ENCODE measurements at regions of chr19 and their contacts with region 1.

Region 1: GRCh38 chr19:13905938-13906904 is at the starts of genes BRME1 and CC2D1A:
- DNase-seq: peak; percentile 76
- ATAC-seq: peak; percentile 98
- H3K4me3 ChIP-seq: peak within 1 kb of the TSS; percentile 81 to 92 (median 90)
- H3K27ac ChIP-seq: peak within 1 kb of the TSS; percentile 73
- H3K4me1 ChIP-seq: peaks cover 24% of the 10 kb centered on the region
- H3K27me3 ChIP-seq: no peaks in the 10 kb centered on the region
- CTCF ChIP-seq: peak; percentile 33
- EP300 ChIP-seq: peak in 1 of 2 experiments; percentile 18; a peak in 1 of 4 replicates
- POLR2A ChIP-seq: peak; percentile 59 to 69
- RAD21 ChIP-seq: no peak
- total RNA-seq, gene BRME1: 0.84 and 1.5 TPM in 2 replicates
- total RNA-seq, gene CC2D1A: 6.4 and 9.7 TPM in 2 replicates

Region 2: DNA sequence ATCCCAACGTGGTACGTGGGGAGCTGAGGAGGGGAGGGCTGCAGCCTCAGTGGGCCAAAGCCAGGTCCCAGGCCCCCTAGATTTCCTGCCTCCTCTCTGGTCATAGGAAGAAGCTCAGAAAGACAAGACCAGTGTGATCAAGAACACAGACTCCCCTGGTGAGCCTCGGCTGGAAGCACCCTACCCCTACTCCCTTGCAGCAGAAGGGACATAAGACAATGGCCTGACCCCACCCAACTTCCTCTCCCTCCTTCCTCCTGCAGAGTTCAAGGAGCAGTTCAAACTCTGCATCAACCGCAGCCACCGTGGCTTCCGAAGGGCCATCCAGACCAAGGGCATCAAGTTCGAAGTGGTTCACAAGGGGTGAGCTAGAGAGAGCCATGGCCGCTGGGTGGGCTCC is 20.5 kb after region 1 on chr19:
- CTCF ChIA-PET with region 1: no interaction called
- POLR2A ChIA-PET with region 1: no interaction called
- in situ Hi-C with region 1: no loop called
- intact Hi-C with region 1: no loop called
- DNase-seq: no peak
- ATAC-seq: no peak
- H3K4me3 ChIP-seq: no peak overlapping the region
- H3K27ac ChIP-seq: no peak overlapping the region
- H3K4me1 ChIP-seq: no peaks in the 10 kb centered on the region
- H3K27me3 ChIP-seq: no peaks in the 10 kb centered on the region
- CTCF ChIP-seq: no peak
- EP300 ChIP-seq: no peak
- POLR2A ChIP-seq: no peak
- RAD21 ChIP-seq: no peak

Region 3: DNA sequence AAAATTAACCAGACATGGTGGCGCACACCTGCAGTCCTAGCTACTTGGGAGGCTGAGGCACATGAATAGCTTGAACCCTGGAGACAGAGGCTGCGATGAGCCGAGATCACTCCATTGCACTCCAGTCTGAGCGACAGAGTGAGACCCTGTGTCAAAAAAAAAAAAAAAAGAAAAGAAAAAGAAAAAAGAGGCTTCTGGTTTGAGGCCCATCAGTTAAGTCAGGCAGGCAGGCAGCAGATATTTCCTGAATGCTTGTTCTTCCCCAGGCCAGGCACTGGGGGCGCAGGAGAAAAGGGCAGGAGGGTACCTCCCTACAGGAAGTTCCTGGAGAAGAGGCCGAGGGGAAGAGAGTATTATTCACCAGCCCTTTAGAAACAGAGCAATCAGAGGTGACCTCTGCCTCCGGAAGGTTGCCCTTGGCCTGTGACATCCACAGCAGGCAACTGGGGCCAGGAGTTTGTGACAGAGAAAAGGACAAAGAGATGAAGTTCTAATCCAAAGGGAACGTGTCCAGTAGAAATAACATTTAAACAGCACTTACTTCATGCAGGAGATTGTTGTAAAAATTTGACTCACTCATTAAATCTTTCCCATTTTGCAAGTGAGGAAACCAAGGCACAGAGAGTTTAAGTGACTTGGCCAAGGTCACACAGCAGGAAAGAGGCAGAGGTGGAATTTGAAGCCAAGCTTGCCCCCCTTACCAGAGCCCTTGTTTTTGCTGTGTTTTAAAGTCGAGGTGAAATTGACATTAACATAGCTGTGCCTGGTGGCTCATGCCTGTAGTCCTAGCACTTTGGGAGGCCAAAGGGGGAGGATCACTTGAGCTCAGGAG is 117.4 kb after region 1 on chr19:
- CTCF ChIA-PET with region 1: no interaction called
- POLR2A ChIA-PET with region 1: no interaction called
- in situ Hi-C with region 1: no loop called
- intact Hi-C with region 1: loop called (anchors 2 kb)
- DNase-seq: peak; percentile 85
- ATAC-seq: peak; percentile 96
- H3K4me3 ChIP-seq: no peak overlapping the region
- H3K27ac ChIP-seq: peak overlapping the region; percentile 28
- H3K4me1 ChIP-seq: peaks cover 45% of the 10 kb centered on the region
- H3K27me3 ChIP-seq: peaks cover 0 to 10% of the 10 kb centered on the region in 2 experiments; a peak in 2 of 5 replicates
- CTCF ChIP-seq: peak; percentile 83
- EP300 ChIP-seq: peak in 1 of 2 experiments; percentile 38; a peak in 1 of 4 replicates
- POLR2A ChIP-seq: no peak
- RAD21 ChIP-seq: peak; percentile 34; the same call in 1 of the 2 replicates

Measured in HepG2 (cell line).